Astrocyte of the cerebellum (primary cell): ENCODE measurements at regions of chr5 and their contacts with region 1.

Region 1: GRCh38 chr5:66742083-66742895 is 146.1 kb downstream of the MAST4 start:
- DNase-seq: no peak
- H3K4me3 ChIP-seq: no peak overlapping the region
- CTCF ChIP-seq: peak; percentile 23

Region 2: GRCh38 chr5:66779528-66779927 is 37.2 kb after region 1 on chr5:
- in situ Hi-C with region 1: loop called (anchors 5 kb)
- DNase-seq: no peak
- H3K4me3 ChIP-seq: no peak overlapping the region
- CTCF ChIP-seq: no peak

Region 3: GRCh38 chr5:66796305-66797292 is 54.3 kb after region 1 on chr5:
- in situ Hi-C with region 1: no loop called
- DNase-seq: no peak
- H3K4me3 ChIP-seq: no peak overlapping the region
- CTCF ChIP-seq: peak; percentile 47